ENCODE measurements at regions of chr5 and their contacts with region 1.

Region 1: DNA sequence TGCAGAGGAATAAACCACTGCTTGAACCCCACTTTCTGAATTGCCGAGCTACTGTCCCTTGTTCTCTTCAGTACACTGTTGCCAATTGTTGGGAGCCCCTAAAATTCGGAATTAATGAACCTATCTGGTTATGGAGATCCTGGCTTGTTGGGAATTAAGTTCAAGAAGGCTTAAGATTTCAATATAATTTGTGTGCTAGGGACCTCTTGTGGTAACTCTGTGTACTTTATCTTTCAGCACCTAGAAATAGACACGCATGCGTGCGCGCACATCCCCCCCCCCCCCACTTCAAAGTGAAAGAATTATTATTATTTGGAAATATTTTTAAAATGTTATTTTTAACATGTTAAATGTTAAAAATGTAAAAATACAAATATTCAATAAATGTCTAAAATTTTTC is 53.3 kb upstream of the FAM169A start:
- DNase-seq: no peak
- ATAC-seq: no peak

Region 2: GRCh38 chr5:74673011-74673790 is 246.3 kb before region 1 on chr5:
- intact Hi-C with region 1: loop called (anchors 5 kb)
- DNase-seq: no peak
- ATAC-seq: peak; percentile 68

Region 3: DNA sequence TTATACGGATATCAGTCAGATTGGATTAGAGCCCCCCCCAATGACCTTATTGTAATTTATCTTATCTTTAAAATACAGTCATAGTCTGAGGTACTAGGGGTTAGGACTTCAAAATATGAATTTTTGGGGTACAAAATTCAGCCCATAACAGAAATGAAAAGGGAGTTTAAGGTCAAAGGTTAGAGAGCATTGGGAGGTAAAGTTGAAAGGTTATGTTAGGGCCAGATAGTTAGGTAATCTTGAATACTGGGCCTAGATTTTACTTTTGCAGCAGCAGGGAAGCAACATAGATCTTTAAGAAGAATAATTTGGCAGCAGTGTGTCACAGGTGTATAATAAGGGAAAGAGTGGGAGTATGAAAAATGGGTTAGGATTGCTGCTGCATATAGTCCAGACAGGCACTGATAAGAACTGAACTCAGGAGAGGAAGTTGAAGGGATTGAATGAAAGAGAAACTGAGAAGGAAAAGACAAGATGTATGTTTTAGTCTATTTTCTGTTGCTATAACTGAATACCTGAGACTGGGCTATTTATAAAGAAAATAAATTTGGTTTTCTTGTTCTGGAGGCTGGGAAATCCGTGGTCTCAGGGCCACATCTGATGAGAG is 143.5 kb after region 1 on chr5:
- intact Hi-C with region 1: no loop called
- DNase-seq: no peak
- ATAC-seq: no peak